Activated CD4-positive, alpha-beta T cell treated with anti-CD3 and anti-CD28 coated beads for 36 hours (primary cell): ENCODE measurements at regions of chr12 and their contacts with region 1.

Region 1: DNA sequence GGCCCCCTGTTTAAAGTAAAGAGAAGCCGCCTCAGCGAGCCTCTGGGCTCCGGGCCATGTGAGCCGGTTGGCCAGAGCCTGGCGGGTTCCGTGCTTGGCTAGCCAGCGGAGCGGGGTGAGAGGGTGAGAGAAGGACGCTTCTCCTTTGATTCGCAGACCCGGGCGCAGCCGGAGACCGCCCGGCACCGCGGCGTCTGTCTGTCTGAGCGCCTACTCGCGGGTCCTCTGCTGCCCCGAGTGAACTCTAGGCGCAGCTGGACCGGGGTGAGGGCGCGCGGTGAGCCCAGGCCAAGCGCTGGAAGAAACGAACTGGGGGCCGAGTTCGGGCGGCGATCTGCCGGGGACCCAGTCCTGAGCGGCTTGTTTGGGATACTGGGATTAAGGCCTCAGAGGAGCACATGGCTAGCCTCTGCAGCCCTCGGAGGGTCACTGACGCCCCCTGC is 41.4 kb upstream of the TBX5 start:
- DNase-seq: peak; percentile 3
- ATAC-seq: no peak
- H3K4me3 Mint-ChIP-seq: no peak overlapping the region
- H3K27ac Mint-ChIP-seq: no peak overlapping the region
- H3K4me1 Mint-ChIP-seq: no peaks in the 10 kb centered on the region
- H3K27me3 Mint-ChIP-seq: peaks cover 76% of the 10 kb centered on the region

Region 2: GRCh38 chr12:114529966-114530365 is 82.7 kb after region 1 on chr12:
- CTCF ChIA-PET with region 1: no interaction called
- POLR2A ChIA-PET with region 1: no interaction called
- intact Hi-C with region 1: no loop called
- DNase-seq: no peak
- ATAC-seq: no peak
- H3K4me3 Mint-ChIP-seq: no peak overlapping the region
- H3K27ac Mint-ChIP-seq: no peak overlapping the region
- H3K4me1 Mint-ChIP-seq: no peaks in the 10 kb centered on the region
- H3K27me3 Mint-ChIP-seq: peaks cover 7% of the 10 kb centered on the region

Region 3: DNA sequence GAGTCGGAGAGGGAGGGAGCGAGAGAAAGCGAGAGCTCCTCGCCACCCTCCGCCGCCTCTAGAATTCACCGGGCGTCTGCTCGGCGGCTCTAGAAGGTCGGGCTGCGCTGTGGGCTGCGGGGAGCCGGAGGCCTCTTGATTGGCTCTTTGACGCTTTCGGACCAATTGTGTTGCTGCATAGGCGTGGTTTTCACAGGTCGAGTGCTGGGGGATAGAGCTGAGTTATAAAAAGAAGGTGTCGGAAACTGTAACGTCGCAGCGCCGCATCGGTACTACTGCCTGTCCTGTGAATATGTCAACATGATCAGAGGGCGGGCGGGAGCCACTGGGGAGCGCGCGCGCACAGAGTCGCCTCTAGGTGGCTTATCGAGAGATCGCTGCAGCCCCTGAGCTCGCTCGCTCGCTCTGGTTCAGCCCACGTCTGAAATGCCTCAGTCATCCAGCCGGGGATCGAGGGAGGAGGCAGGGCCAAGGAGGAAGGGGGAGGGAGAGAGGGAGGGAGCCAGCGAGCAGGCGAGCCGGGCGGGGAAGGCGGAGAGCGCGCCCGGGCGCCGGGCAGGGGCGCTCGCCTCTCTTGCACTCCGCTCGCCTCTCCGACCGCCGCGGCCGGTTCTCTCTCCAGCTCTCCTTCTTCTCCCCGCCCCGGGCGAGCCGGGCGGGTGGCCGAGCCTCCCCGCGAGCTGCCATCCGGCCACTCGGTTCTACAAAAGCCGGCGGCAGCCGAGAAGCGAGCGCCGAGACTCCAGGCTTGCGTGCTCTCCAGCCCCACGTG is 237.0 kb after region 1 on chr12 and contains the start of gene TBX3:
- CTCF ChIA-PET with region 1: no interaction called
- POLR2A ChIA-PET with region 1: no interaction called
- intact Hi-C with region 1: loop called in 1 of 2 experiments (anchors 5 kb)
- DNase-seq: peak; percentile 86
- ATAC-seq: peak; percentile 94
- H3K4me3 Mint-ChIP-seq: peak within 1 kb of the TSS; percentile 71
- H3K27ac Mint-ChIP-seq: peak within 1 kb of the TSS; percentile 33
- H3K4me1 Mint-ChIP-seq: peaks cover 38% of the 10 kb centered on the region
- H3K27me3 Mint-ChIP-seq: peaks cover 90% of the 10 kb centered on the region
- total RNA-seq, gene TBX3: not detected

Region 4: GRCh38 chr12:114692558-114693480 is 245.5 kb after region 1 on chr12:
- CTCF ChIA-PET with region 1: no interaction called
- POLR2A ChIA-PET with region 1: no interaction called
- intact Hi-C with region 1: loop called in 1 of 2 experiments (anchors 10 kb)
- DNase-seq: no peak
- ATAC-seq: no peak
- H3K4me3 Mint-ChIP-seq: no peak overlapping the region
- H3K27ac Mint-ChIP-seq: no peak overlapping the region
- H3K4me1 Mint-ChIP-seq: peaks cover 2% of the 10 kb centered on the region
- H3K27me3 Mint-ChIP-seq: peaks cover 90% of the 10 kb centered on the region